CD8-positive, alpha-beta memory T cell (primary cell): ENCODE measurements at regions of chr15 and their contacts with region 1.

Region 1: GRCh38 chr15:90320061-90320884 is 31.8 kb upstream of the ZNF774 start:
- DNase-seq: peak; percentile 46 to 78 (median 61)
- H3K4me3 ChIP-seq: no peak overlapping the region
- H3K4me3 Mint-ChIP-seq: no peak overlapping the region
- H3K27ac ChIP-seq: no peak overlapping the region
- H3K27ac Mint-ChIP-seq: no peak overlapping the region
- H3K4me1 ChIP-seq: peaks cover 6% of the 10 kb centered on the region
- H3K4me1 Mint-ChIP-seq: peaks cover 5 to 9% (median 6%) of the 10 kb centered on the region in 3 donors
- H3K27me3 ChIP-seq: no peaks in the 10 kb centered on the region
- H3K27me3 Mint-ChIP-seq: peaks cover 0 to 1% of the 10 kb centered on the region in 2 donors

Region 2: DNA sequence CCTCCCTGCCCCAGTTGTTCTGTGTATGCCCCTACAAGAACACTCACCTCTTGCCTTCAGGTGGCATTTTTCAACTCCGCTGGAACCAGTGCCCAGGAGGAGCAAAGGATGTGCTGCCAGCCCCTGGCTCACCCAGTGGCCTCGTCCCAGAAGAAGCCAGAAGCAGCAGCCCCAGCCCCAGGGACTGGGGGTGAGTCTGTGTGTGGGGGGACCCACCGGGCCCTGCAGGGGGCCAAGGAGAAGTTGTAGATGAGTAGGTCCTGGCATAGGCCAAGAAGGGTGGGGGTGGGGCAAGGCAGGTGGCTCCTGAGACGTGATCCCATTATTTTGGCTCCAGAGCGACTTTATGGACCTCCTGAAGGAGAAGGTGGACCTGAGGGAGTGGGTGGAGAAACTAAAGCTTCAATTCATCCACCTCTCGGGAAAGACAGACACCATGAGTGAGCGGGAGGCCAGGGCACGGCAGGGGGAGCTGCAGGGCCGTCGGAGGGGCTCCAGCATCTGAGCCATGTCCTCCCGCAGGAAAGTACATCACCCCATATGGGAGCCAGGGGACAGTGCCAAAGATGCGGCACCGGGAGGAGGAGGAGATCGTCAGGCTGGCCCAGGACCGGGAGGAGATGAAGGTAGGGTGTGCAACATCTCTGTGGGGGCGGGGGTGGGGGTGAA is 25.5 kb before region 1 on chr15:
- CTCF ChIA-PET with region 1: interaction called, 10 read pairs
- POLR2A ChIA-PET with region 1: no interaction called
- DNase-seq: no peak
- H3K4me3 ChIP-seq: no peak overlapping the region
- H3K4me3 Mint-ChIP-seq: no peak overlapping the region
- H3K27ac ChIP-seq: no peak overlapping the region
- H3K27ac Mint-ChIP-seq: no peak overlapping the region
- H3K4me1 ChIP-seq: no peaks in the 10 kb centered on the region
- H3K4me1 Mint-ChIP-seq: peaks cover 2 to 7% (median 5%) of the 10 kb centered on the region in 3 donors
- H3K27me3 ChIP-seq: no peaks in the 10 kb centered on the region
- H3K27me3 Mint-ChIP-seq: peaks cover 2 to 4% of the 10 kb centered on the region in 2 donors

Region 3: DNA sequence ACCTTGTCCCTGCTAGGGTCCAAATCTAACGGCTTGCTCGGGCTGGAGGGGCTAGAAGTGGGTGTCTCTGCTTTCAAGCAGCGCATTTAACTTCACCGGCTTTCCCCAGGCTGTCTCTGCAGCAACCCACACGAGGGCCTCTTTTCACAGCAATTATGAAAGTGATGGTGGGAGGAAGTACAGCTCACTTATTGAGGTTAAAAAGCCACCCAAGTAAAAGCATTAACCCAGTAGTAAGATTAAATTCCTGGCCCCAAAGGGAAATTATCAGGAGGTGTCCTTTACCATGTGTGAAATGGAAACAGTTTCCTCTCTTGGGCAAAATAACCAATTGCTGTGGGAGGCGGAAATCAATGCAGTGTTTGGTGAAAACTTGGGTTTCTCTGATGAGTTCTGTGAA is 13.7 kb before region 1 on chr15:
- CTCF ChIA-PET with region 1: interaction called, 21 read pairs
- POLR2A ChIA-PET with region 1: no interaction called
- DNase-seq: peak in 1 of 5 donors; percentile 6
- H3K4me3 ChIP-seq: no peak overlapping the region
- H3K4me3 Mint-ChIP-seq: peak overlapping the region in 6 of 7 donors; percentile 54 to 71 (median 63)
- H3K27ac ChIP-seq: no peak overlapping the region
- H3K27ac Mint-ChIP-seq: peak overlapping the region; percentile 2 to 93 (median 84)
- H3K4me1 ChIP-seq: peaks cover 18% of the 10 kb centered on the region
- H3K4me1 Mint-ChIP-seq: peaks cover 20 to 27% (median 26%) of the 10 kb centered on the region in 3 donors
- H3K27me3 ChIP-seq: no peaks in the 10 kb centered on the region
- H3K27me3 Mint-ChIP-seq: peaks cover 0 to 1% of the 10 kb centered on the region in 2 donors

Region 4: DNA sequence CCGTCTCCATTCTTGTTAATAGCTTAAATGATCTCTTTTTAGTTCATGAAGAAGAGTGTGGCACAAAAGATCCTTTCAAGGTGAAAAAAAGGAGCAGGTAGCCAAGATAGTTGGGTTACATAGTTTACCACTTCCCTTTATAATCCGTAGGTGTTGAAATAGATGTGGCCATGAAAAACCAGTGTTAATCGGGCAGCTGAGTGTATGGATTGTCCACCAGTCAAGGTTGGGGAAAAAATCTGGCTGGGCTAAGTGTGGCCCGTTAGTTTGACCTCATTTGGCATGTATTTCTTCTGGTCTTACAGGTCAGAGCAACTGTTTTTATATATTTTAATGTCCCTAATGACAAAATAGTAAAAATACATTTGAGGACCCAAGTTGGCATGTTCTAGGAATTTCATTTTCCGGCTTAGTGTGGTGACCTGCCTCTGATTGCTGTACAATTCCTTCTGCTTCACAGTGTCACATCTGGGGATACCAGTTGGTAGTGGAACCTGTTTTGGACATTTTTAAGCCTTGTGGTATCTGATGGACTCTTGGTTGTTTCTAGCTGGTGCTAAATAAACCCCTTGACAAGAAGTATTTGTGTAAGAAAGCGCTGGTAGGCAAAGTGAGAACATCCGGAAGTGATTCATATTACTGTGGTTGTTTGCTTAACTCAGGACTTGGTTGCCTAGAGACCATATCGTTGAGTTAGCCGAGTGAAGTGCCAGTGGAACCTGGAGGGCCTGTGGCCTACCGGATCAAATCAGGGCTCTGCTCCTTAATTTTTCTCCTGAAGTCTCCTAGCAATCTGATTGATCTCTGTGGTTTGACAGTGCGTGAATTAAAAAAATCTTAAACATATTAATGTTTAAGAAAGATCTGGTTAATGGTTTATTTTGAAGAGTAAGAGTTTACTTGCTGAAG is 80.4 kb after region 1 on chr15:
- CTCF ChIA-PET with region 1: interaction called, 11 read pairs
- POLR2A ChIA-PET with region 1: no interaction called
- DNase-seq: peak; percentile 48 to 85 (median 84)
- H3K4me3 ChIP-seq: peak overlapping the region; percentile 23
- H3K4me3 Mint-ChIP-seq: peak overlapping the region; percentile 40 to 93 (median 79)
- H3K27ac ChIP-seq: peak overlapping the region; percentile 91
- H3K27ac Mint-ChIP-seq: peak overlapping the region; percentile 96 to 100 (median 99)
- H3K4me1 ChIP-seq: peaks cover 48% of the 10 kb centered on the region
- H3K4me1 Mint-ChIP-seq: peaks cover 60 to 88% (median 83%) of the 10 kb centered on the region in 3 donors
- H3K27me3 ChIP-seq: no peaks in the 10 kb centered on the region
- H3K27me3 Mint-ChIP-seq: no peaks in the 10 kb centered on the region

Region 5: DNA sequence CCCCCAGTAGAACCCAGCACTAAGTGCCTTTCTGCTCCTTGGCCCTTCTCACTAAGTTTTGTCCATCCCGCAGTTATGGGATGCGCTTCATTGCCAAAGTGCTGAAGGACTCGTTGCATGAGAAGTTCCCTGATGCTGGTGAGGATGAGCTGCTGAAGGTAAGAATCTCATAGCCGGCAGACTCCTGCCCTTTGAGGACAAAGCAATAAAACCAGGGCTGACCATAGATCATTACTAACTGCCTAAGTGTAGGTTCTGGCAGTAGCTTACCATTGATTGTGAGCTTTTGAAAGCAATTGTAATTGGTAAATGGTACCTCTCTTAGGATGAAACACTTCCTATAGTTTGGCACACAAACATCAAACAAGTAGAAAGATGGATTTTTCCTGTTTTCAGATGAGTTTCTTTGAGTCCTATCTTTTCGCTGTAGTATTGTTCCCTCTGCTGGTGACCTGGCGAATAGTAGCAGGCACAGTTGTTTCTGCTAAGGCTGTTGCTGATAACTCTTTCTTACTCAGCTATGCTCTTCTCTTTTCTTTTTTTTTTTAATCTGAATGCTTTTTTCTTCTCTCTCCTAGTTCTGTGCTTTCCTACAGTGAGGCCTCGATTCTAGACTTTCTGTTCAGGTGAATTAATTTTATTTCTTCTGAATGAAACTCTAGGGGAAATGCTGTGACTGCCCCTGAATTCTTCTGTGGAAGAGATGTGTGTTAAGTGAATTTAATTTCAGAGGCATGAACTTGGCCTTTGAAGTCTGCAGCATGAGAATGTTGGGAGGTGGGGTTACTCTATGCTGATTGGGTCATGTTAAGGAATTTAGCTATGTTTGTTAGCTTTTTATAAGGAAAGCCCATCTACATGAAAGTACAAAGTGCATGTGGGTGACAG is 162.1 kb after region 1 on chr15:
- CTCF ChIA-PET with region 1: interaction called, 87 read pairs
- POLR2A ChIA-PET with region 1: interaction called, 3 read pairs
- DNase-seq: peak; percentile 6 to 51 (median 18)
- H3K4me3 ChIP-seq: no peak overlapping the region
- H3K4me3 Mint-ChIP-seq: no peak overlapping the region
- H3K27ac ChIP-seq: no peak overlapping the region
- H3K27ac Mint-ChIP-seq: peak overlapping the region in 4 of 8 donors; percentile 6 to 60 (median 44)
- H3K4me1 ChIP-seq: peaks cover 14% of the 10 kb centered on the region
- H3K4me1 Mint-ChIP-seq: peaks cover 31 to 44% (median 40%) of the 10 kb centered on the region in 3 donors
- H3K27me3 ChIP-seq: no peaks in the 10 kb centered on the region
- H3K27me3 Mint-ChIP-seq: peaks cover 0 to 2% of the 10 kb centered on the region in 2 donors